Pancreas (tissue), 10 donors: ENCODE measurements at regions of chr10 and their contacts with region 1.

Region 1: GRCh38 chr10:58967551-58968388 is 208.7 kb upstream of the PHYHIPL start:
- DNase-seq: peak; percentile 42 to 83 (median 65)
- ATAC-seq: peak; percentile 85 to 96 (median 94)
- H3K4me3 ChIP-seq: peak overlapping the region in 2 of 4 donors; percentile 11 to 28
- H3K27ac ChIP-seq: peak overlapping the region in 2 of 4 donors; percentile 5 to 27
- H3K4me1 ChIP-seq: peaks cover 0 to 12% (median 4%) of the 10 kb centered on the region in 3 donors
- H3K27me3 ChIP-seq: no peaks in the 10 kb centered on the region
- CTCF ChIP-seq: no peak

Region 2: DNA sequence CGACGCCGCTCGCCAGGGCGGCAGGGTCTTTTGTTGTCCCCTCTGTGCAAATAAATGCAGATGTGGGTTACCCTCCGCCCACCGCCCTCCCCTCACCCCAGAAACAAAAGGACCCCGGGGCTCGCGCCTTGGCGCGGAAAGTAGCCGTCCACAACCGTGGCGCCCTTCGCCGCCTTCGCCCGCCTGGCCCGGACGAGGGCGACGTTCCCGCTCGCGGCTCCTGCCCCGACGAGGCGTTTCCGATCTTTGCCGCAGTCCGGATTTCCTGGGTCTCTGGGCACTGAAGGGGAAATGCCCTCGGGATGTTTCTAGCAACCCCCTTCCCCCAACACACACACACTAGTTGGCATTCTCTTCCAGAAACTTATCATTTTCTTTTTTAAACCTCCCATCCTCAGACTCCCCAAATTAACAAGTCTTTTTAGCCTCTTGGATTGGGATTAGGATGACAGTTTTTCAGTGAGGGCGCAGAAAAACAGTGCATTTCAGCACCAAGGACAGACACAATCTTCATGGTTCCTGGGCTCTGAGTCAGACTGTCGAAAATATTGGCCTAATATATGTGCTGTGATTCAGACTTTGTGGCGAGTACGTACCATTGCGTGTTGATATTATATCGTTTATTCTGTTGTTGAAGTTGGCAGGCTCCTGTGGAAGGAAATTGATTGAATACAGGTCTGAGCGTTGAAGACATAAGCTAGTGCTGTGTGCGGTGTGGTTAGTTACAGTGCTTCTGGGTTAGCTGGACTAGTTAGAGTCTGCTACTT is 209.4 kb after region 1 on chr10:
- intact Hi-C with region 1: loop called in 1 of 3 experiments (anchors 5 kb)
- DNase-seq: peak; percentile 50 to 80 (median 61)
- ATAC-seq: peak; percentile 70 to 76 (median 72)
- H3K4me3 ChIP-seq: peak overlapping the region; percentile 56 to 73 (median 60)
- H3K27ac ChIP-seq: peak overlapping the region; percentile 70 to 95 (median 75)
- H3K4me1 ChIP-seq: peaks cover 3 to 11% (median 11%) of the 10 kb centered on the region in 3 donors
- H3K27me3 ChIP-seq: no peaks in the 10 kb centered on the region
- CTCF ChIP-seq: no peak

Region 3: DNA sequence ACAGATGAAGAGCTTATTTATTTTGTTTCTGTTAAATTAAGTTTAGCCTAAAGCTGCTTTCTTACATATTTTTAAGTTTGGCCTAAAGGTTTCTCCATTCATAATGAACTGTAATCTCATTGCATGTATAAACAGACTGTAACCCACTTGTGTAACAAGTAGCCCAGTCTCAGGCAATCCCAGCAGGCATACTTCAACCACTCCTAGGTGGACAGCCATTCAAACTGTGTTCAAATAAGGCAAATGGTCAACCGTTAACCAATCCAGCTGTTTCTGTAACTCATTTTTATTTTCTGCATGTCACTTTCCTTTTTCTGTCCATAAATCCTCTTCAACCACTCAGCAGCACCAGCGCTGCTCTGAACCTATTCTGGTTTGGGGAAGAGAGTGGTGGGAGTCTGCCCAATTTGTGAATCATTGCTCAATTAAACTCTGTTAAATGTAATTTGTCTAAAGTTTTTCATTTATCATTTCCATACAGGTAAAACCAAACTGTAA is 244.6 kb after region 1 on chr10:
- intact Hi-C with region 1: no loop called
- DNase-seq: no peak
- ATAC-seq: no peak
- H3K4me3 ChIP-seq: no peak overlapping the region
- H3K27ac ChIP-seq: no peak overlapping the region
- H3K4me1 ChIP-seq: no peaks in the 10 kb centered on the region
- H3K27me3 ChIP-seq: no peaks in the 10 kb centered on the region
- CTCF ChIP-seq: no peak